ENCODE measurements at regions of chr17 and their contacts with region 1.

Region 1: GRCh38 chr17:67824735-67825626 is at the start of gene BPTF:
- DNase-seq: peak; percentile 95
- ATAC-seq: peak; percentile 98
- total RNA-seq, gene BPTF: 68.7 TPM

Region 2: GRCh38 chr17:67717624-67718329 is 107.2 kb before region 1 on chr17 and contains the start of gene NOL11:
- intact Hi-C with region 1: loop called (anchors 10 kb)
- DNase-seq: peak; percentile 100
- ATAC-seq: peak; percentile 99
- total RNA-seq, gene NOL11: 22.6 TPM

Region 3: GRCh38 chr17:68238164-68238872 is 413.3 kb after region 1 on chr17:
- intact Hi-C with region 1: no loop called
- DNase-seq: no peak
- ATAC-seq: no peak